Activated T-helper 1 cell treated with anti-CD3 and anti-CD28 coated beads, Interleukin-12 subunit alpha, Interleukin-12 subunit beta, Interleukin-2, Interleukin-4 antibody, amounts not matched to agents 30 ng/mL and 10 ng/mL and 1 ng/mL, durations not matched to agents 14 hours and 24 hours and 36 hours (primary cell): ENCODE measurements at regions of chr4 and their contacts with region 1.

Region 1: GRCh38 chr4:173420324-173420752 is 21.4 kb upstream of the SCRG1 start:
- DNase-seq: no peak
- H3K4me3 Mint-ChIP-seq: no peak overlapping the region
- H3K27ac Mint-ChIP-seq: no peak overlapping the region
- H3K4me1 Mint-ChIP-seq: peaks cover 21% of the 10 kb centered on the region
- H3K27me3 Mint-ChIP-seq: no peaks in the 10 kb centered on the region

Region 2: GRCh38 chr4:173013232-173013930 is 407.0 kb before region 1 on chr4:
- intact Hi-C with region 1: loop called (anchors 1 kb)
- DNase-seq: peak; percentile 14
- H3K4me3 Mint-ChIP-seq: no peak overlapping the region
- H3K27ac Mint-ChIP-seq: no peak overlapping the region
- H3K4me1 Mint-ChIP-seq: no peaks in the 10 kb centered on the region
- H3K27me3 Mint-ChIP-seq: peaks cover under 1% of the 10 kb centered on the region

Region 3: DNA sequence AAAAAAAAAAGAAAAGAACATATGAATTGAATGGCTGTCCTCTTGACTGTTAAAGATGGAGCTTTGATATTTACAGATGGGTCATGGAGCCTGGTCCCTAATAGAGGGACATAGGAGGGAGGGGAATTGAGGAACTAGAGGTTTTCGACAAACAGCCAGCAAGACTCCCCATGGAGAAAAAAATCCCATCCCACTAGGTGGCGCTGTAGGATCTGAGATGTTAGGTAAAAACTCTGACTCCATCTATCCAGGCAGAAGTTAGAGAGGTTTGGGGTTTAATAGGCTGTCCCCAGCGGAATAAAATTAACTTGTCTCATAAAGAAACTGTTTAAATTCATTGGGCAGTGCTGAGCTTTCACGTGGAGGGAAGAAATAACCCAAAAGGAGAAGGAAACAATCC is 132.0 kb before region 1 on chr4:
- intact Hi-C with region 1: loop called (anchors 1 kb)
- DNase-seq: peak; percentile 62
- H3K4me3 Mint-ChIP-seq: no peak overlapping the region
- H3K27ac Mint-ChIP-seq: peak overlapping the region; percentile 67
- H3K4me1 Mint-ChIP-seq: peaks cover 17% of the 10 kb centered on the region
- H3K27me3 Mint-ChIP-seq: no peaks in the 10 kb centered on the region

Region 4: GRCh38 chr4:173334085-173334772 is 86.1 kb before region 1 on chr4 and contains the start of gene HMGB2:
- intact Hi-C with region 1: loop called (anchors 1 kb)
- DNase-seq: peak; percentile 99
- H3K4me3 Mint-ChIP-seq: peak within 1 kb of the TSS; percentile 98
- H3K27ac Mint-ChIP-seq: peak within 1 kb of the TSS; percentile 99
- H3K4me1 Mint-ChIP-seq: peaks cover 56% of the 10 kb centered on the region
- H3K27me3 Mint-ChIP-seq: no peaks in the 10 kb centered on the region
- total RNA-seq, gene HMGB2: 274 and 292 TPM in 2 replicates

Region 5: GRCh38 chr4:173494013-173494970 is 74.0 kb after region 1 on chr4:
- intact Hi-C with region 1: loop called (anchors 1 kb)
- DNase-seq: peak; percentile 56
- H3K4me3 Mint-ChIP-seq: peak overlapping the region; percentile 87
- H3K27ac Mint-ChIP-seq: no peak overlapping the region
- H3K4me1 Mint-ChIP-seq: peaks cover 33% of the 10 kb centered on the region
- H3K27me3 Mint-ChIP-seq: peaks cover 35% of the 10 kb centered on the region

Region 6: DNA sequence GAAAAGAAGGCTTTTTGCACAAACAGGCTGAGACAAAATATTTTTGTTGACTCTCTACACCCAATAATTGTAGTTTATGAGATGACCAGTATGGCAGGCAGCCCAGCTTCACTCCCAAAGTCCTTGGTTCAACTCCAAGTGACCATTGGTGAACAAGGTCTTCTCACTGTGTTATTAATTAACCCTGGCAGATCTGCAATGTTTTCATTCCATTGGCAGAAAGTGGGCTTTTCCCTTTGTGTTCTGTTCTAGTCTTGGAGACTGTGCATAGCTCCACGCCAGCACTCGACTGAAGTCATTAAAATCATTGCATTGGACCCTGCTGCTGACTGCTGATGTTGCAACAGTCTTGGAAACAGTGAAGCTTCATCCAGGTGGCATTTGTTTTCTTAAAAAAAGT is 387.0 kb after region 1 on chr4:
- intact Hi-C with region 1: no loop called
- DNase-seq: no peak
- H3K4me3 Mint-ChIP-seq: no peak overlapping the region
- H3K27ac Mint-ChIP-seq: no peak overlapping the region
- H3K4me1 Mint-ChIP-seq: no peaks in the 10 kb centered on the region
- H3K27me3 Mint-ChIP-seq: no peaks in the 10 kb centered on the region

Region 7: DNA sequence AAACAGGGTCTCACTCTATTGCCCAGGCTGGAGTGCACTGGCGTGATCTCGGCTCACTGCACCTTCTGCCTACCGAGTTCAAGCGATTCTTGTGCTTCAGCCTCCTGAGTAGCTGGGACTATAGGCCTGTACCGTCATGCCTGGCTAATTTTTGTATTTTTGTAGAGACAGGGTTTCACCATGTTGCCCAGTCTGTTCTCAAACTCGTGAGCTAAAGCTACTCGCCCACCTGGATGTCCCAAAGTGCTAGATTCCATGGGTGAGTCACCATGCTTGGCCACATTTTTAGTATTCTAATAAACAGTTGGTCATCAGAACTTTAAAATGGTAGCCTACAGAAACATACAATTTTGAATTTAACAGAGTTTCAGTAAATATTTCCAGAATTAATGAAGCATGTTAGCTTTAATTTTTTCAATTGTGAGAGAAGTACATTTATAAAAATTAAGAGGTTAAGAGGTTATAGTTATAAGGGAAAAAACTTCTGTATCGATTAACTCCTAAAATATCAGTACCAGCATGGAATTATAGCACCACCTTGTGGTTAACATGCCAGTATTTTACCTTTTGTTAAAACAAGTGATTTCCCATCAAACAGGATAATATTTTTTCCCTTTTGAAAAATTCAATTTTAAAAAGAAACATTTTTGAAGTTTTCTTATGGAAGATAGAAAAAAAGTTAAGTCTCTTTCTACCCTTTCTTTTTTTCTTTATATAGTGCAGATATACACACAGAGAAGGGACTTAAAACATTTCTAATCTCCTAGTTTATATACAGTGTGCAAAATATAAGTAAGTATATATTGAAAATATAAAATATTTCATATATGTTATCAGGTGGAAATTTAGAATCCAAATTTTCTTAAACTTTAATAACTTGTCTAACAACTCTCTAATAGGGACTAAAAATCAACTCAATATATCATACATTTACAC is 898.8 kb after region 1 on chr4:
- intact Hi-C with region 1: loop called (anchors 1 kb)
- DNase-seq: no peak
- H3K4me3 Mint-ChIP-seq: no peak overlapping the region
- H3K27ac Mint-ChIP-seq: no peak overlapping the region
- H3K4me1 Mint-ChIP-seq: no peaks in the 10 kb centered on the region
- H3K27me3 Mint-ChIP-seq: no peaks in the 10 kb centered on the region